Panc1 (cell line): ENCODE measurements at regions of chr1 and their contacts with region 1.

Region 1: DNA sequence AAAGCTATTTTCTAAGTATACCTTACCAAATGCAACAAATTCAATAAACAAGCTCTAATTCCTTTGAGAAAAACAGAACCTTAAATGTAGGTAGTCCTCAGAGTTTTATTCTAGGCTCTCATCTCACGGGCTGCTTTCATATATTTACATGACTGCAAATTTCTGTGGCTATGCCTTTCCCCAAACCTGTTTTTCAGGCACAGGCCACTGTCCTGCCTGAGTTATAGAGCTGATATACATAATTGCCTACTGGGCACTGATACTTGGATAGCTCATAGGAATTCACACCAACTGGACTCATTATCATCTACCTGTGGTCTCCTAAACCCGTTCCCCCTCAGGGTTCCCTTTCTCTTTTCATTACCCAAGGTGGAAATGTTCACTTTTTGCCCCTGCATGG is 21.1 kb upstream of the RAVER2 start:
- DNase-seq: no peak
- ATAC-seq: no peak
- H3K4me3 ChIP-seq: no peak overlapping the region
- H3K27ac ChIP-seq: no peak overlapping the region
- H3K4me1 ChIP-seq: no peaks in the 10 kb centered on the region
- H3K27me3 ChIP-seq: peaks cover 15% of the 10 kb centered on the region
- CTCF ChIP-seq: no peak

Region 2: GRCh38 chr1:64335636-64336035 is 388.1 kb before region 1 on chr1:
- CTCF ChIA-PET with region 1: no interaction called
- POLR2A ChIA-PET with region 1: interaction called, 11 read pairs
- in situ Hi-C with region 1: no loop called
- intact Hi-C with region 1: no loop called
- DNase-seq: no peak
- ATAC-seq: no peak
- H3K4me3 ChIP-seq: no peak overlapping the region
- H3K27ac ChIP-seq: peak overlapping the region; percentile 34; the same call in 1 of the 2 replicates
- H3K4me1 ChIP-seq: peaks cover 11% of the 10 kb centered on the region; the same call in 1 of the 2 replicates
- H3K27me3 ChIP-seq: no peaks in the 10 kb centered on the region
- CTCF ChIP-seq: no peak

Region 3: GRCh38 chr1:64459743-64460142 is 264.0 kb before region 1 on chr1:
- CTCF ChIA-PET with region 1: no interaction called
- POLR2A ChIA-PET with region 1: interaction called, 12 read pairs
- in situ Hi-C with region 1: no loop called
- intact Hi-C with region 1: no loop called
- DNase-seq: no peak
- ATAC-seq: no peak
- H3K4me3 ChIP-seq: no peak overlapping the region
- H3K27ac ChIP-seq: no peak overlapping the region
- H3K4me1 ChIP-seq: no peaks in the 10 kb centered on the region
- H3K27me3 ChIP-seq: no peaks in the 10 kb centered on the region
- CTCF ChIP-seq: no peak

Region 4: GRCh38 chr1:64539781-64540218 is 184.0 kb before region 1 on chr1:
- CTCF ChIA-PET with region 1: no interaction called
- POLR2A ChIA-PET with region 1: no interaction called
- in situ Hi-C with region 1: no loop called
- intact Hi-C with region 1: no loop called
- DNase-seq: no peak
- ATAC-seq: no peak
- H3K4me3 ChIP-seq: no peak overlapping the region
- H3K27ac ChIP-seq: no peak overlapping the region
- H3K4me1 ChIP-seq: peaks cover 20% of the 10 kb centered on the region
- H3K27me3 ChIP-seq: no peaks in the 10 kb centered on the region
- CTCF ChIP-seq: no peak